ENCODE measurements at regions of chr17 and their contacts with region 1.

Region 1: GRCh38 chr17:81217491-81217890 is 5.3 kb downstream of the CEP131 start:
- DNase-seq: no peak
- ATAC-seq: no peak
- H3K4me3 ChIP-seq: no peak overlapping the region
- H3K27ac ChIP-seq: no peak overlapping the region
- H3K4me1 ChIP-seq: peaks cover 4% of the 10 kb centered on the region
- H3K27me3 ChIP-seq: no peaks in the 10 kb centered on the region
- CTCF ChIP-seq: no peak
- EP300 ChIP-seq: no peak
- POLR2A ChIP-seq: no peak
- RAD21 ChIP-seq: no peak

Region 2: DNA sequence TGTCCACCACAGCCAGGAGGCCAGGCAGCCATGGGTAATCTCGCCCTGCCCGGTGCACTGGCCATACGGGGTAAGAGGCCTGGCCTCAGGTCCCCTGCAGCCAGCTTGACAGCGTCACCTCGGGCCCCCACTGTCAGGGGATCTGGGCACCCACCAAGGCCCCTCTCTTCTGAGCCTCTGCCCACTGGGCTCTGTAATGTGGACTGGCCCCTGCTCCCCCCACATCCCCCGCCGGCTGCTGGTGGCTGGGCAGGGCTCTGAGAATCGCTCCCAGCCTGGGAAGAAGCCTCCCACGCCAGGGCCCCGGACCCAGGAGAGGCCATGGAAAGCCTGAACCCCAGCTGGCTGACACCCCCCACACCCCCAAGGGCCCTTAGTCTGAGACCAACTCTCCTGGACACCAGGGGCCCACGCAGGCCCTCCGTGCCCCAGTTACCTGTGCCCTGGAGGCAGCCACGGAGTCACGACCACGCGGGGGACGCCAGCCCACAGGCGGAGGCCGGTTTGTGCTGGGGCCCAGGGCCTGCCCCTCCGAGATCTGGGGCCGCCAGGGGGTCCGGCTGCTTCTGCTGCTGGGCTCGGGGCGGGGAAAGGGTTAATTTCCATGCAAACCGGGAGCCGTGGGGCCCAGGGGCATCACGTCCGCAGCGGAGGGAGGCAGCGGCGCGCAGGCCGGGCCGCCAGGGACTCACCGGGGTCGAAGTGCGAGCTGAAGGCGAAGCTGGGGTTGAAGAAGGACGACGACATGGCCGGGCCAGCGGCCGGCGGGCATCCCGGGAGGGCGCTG is 52.1 kb before region 1 on chr17 and contains the start of gene PVALEF:
- CTCF ChIA-PET with region 1: no interaction called
- POLR2A ChIA-PET with region 1: no interaction called
- RAD21 ChIA-PET with region 1: no interaction called
- SMC1A ChIA-PET with region 1: no interaction called
- in situ Hi-C with region 1: loop called (anchors 5 kb)
- intact Hi-C with region 1: no loop called
- DNase-seq: no peak
- ATAC-seq: no peak
- H3K4me3 ChIP-seq: no peak within 1 kb of the TSS
- H3K27ac ChIP-seq: no peak within 1 kb of the TSS
- H3K4me1 ChIP-seq: no peaks in the 10 kb centered on the region
- H3K27me3 ChIP-seq: no peaks in the 10 kb centered on the region; a peak in 4 of 4 replicates
- CTCF ChIP-seq: no peak
- EP300 ChIP-seq: no peak
- POLR2A ChIP-seq: no peak
- RAD21 ChIP-seq: no peak
- polyA plus RNA-seq, gene PVALEF: not detected

Region 3: DNA sequence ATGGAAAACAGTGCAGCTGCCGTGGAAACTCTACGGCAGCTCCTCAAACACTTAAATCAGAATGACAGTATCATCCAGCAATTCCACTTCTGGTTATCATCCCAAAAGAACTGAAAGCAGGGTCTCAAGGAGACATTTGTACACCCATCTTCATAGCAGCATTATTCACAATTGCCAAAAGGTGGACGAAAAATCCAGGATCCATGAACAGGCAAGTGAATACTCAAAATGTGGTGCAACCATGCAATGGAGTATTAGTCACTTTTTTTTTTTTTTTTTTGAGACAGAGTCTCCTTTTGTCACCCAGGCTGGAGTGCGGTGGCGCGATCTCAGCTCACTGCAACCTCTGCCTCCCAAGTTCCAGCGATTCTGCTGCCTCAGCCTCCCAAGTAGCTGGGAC is 40.8 kb before region 1 on chr17:
- CTCF ChIA-PET with region 1: no interaction called
- POLR2A ChIA-PET with region 1: no interaction called
- RAD21 ChIA-PET with region 1: no interaction called
- SMC1A ChIA-PET with region 1: no interaction called
- in situ Hi-C with region 1: no loop called
- intact Hi-C with region 1: no loop called
- DNase-seq: no peak
- ATAC-seq: no peak
- H3K4me3 ChIP-seq: no peak overlapping the region
- H3K27ac ChIP-seq: no peak overlapping the region
- H3K4me1 ChIP-seq: no peaks in the 10 kb centered on the region
- H3K27me3 ChIP-seq: no peaks in the 10 kb centered on the region
- CTCF ChIP-seq: no peak
- EP300 ChIP-seq: no peak
- POLR2A ChIP-seq: no peak
- RAD21 ChIP-seq: no peak